CD4-positive, alpha-beta memory T cell (primary cell): ENCODE measurements at regions of chr11 and their contacts with region 1.

Region 1: GRCh38 chr11:85752890-85753581 is 57.9 kb downstream of the SYTL2 start:
- DNase-seq: peak; percentile 97 to 98 (median 98)
- H3K4me3 ChIP-seq: peak overlapping the region; percentile 0 to 50
- H3K4me3 Mint-ChIP-seq: peak overlapping the region; percentile 73 to 93 (median 80)
- H3K27ac ChIP-seq: peak overlapping the region; percentile 60
- H3K27ac Mint-ChIP-seq: peak overlapping the region; percentile 97 to 99 (median 98)
- H3K4me1 ChIP-seq: peaks cover 88% of the 10 kb centered on the region
- H3K4me1 Mint-ChIP-seq: peaks cover 73 to 97% (median 86%) of the 10 kb centered on the region in 4 donors
- H3K27me3 ChIP-seq: no peaks in the 10 kb centered on the region
- H3K27me3 Mint-ChIP-seq: peaks cover 2 to 5% of the 10 kb centered on the region in 2 donors

Region 2: GRCh38 chr11:85627998-85628770 is 124.9 kb before region 1 on chr11 and contains the start of gene TMEM126B:
- CTCF ChIA-PET with region 1: no interaction called
- POLR2A ChIA-PET with region 1: no interaction called
- intact Hi-C with region 1: loop called (anchors 1 kb)
- DNase-seq: peak; percentile 92 to 97 (median 94)
- H3K4me3 ChIP-seq: peak within 1 kb of the TSS; percentile 58 to 73
- H3K4me3 Mint-ChIP-seq: peak within 1 kb of the TSS; percentile 93 to 99 (median 98)
- H3K27ac ChIP-seq: peak within 1 kb of the TSS; percentile 82
- H3K27ac Mint-ChIP-seq: peak within 1 kb of the TSS; percentile 91 to 99 (median 97)
- H3K4me1 ChIP-seq: peaks cover 30% of the 10 kb centered on the region
- H3K4me1 Mint-ChIP-seq: peaks cover 27 to 47% (median 36%) of the 10 kb centered on the region in 4 donors
- H3K27me3 ChIP-seq: no peaks in the 10 kb centered on the region
- H3K27me3 Mint-ChIP-seq: peaks cover 0 to 2% of the 10 kb centered on the region in 2 donors
- total RNA-seq, gene TMEM126B: 40.9 to 46.8 TPM

Region 3: DNA sequence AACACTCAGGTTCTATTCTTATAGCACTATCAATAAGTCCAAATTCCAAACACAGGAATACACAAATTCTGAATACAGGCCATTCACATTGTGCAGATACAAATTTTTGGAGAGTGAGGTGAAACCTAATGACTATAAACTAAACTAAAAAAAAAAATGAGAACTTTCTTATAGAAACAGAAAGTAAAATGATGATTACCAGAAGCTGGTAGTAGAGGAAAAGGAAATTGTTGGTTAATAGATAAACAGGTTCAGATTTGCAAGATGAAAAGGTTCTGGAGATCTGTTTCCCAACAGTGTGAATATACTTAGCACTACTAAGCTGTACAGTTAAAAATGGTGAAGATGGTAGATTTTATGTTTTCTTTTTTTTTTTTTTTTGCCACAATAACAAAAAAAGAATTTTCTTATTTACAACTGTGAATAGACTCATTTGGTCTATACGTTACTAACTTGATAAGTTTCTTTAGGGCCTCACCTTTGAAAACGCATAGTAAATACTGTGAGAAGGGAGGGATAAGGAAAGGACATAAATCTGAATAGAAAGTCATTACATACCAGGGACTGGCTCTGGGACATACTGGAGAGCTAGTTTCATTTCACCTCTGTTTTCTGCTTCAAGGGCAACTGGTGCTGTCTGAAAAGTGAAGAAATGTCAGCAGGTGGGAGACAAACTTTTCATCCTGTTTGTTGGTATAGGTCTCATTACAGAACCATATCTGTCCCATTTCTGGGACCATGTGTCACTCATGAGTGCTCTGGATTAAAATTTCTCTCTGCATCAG is 52.9 kb before region 1 on chr11:
- CTCF ChIA-PET with region 1: interaction called, 3 read pairs
- POLR2A ChIA-PET with region 1: interaction called, 4 read pairs
- intact Hi-C with region 1: loop called (anchors 2 kb)
- DNase-seq: peak in 4 of 5 donors; percentile 32 to 53 (median 40)
- H3K4me3 ChIP-seq: peak overlapping the region in 1 of 2 donors; percentile 7
- H3K4me3 Mint-ChIP-seq: peak overlapping the region in 7 of 8 donors; percentile 32 to 72 (median 61)
- H3K27ac ChIP-seq: no peak overlapping the region
- H3K27ac Mint-ChIP-seq: peak overlapping the region; percentile 40 to 87 (median 68)
- H3K4me1 ChIP-seq: peaks cover 25% of the 10 kb centered on the region
- H3K4me1 Mint-ChIP-seq: peaks cover 21 to 32% (median 23%) of the 10 kb centered on the region in 4 donors
- H3K27me3 ChIP-seq: no peaks in the 10 kb centered on the region
- H3K27me3 Mint-ChIP-seq: no peaks in the 10 kb centered on the region

Region 4: DNA sequence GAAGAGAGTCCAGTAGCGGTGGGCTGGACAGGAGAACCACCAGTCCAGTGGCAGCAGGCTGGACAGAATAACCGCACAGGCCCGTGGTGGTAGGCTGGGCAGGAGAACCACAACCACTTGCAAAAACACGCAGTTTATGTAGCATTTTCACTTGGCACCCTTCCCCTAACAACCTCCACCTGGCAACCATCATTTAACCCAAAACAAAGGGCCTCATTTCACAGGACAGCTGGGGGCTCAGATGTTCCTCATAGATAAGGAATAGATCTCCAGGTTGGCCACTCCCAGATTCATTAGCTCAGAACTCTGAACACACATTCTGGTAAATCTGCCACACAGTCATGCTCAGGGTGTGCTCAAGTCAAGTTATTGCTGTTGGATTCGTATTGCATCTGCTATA is 16.7 kb after region 1 on chr11:
- CTCF ChIA-PET with region 1: interaction called, 4 read pairs
- POLR2A ChIA-PET with region 1: interaction called, 7 read pairs
- intact Hi-C with region 1: loop called (anchors 2 kb)
- DNase-seq: no peak
- H3K4me3 ChIP-seq: no peak overlapping the region
- H3K4me3 Mint-ChIP-seq: no peak overlapping the region
- H3K27ac ChIP-seq: no peak overlapping the region
- H3K27ac Mint-ChIP-seq: no peak overlapping the region
- H3K4me1 ChIP-seq: peaks cover 11% of the 10 kb centered on the region
- H3K4me1 Mint-ChIP-seq: peaks cover 17 to 67% (median 46%) of the 10 kb centered on the region in 4 donors
- H3K27me3 ChIP-seq: no peaks in the 10 kb centered on the region
- H3K27me3 Mint-ChIP-seq: peaks cover 0 to 1% of the 10 kb centered on the region in 2 donors

Region 5: DNA sequence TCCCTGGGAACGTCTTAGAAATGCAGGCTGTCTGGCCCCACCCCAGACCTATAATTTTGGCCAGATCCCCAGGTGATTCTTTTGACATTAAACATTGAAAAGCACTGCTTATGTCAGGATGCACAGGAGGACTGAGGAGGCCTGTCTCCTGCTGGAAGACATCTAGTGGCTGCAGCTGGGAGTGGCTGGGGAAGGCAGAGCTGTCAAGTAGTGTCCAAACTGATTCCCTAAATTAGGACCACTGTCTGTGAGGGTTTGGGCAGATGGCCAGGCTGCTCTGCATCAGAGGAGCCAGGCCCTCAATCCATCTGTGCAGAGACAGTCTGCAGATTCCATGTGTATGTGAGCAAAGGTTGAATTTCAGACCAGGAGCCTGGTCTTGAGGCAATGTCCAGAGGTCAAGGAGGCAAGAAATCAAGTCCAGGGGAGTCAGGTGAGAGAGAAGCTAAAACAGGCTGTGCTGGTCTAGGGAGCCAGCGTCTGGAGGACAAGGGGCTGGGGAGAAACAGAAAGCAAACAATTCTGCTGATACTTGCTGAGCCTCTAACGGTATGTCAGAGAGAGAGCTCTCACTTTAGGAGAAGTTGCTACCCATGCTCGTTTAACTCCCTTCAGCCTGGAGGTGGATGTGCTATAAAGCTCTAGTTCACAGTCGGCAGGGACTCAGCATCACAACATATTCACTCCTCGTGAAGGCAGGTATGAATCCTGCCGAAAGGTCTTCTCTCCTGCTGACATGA is 73.2 kb after region 1 on chr11:
- CTCF ChIA-PET with region 1: interaction called, 23 read pairs
- POLR2A ChIA-PET with region 1: interaction called, 34 read pairs
- intact Hi-C with region 1: loop called (anchors 1 kb)
- DNase-seq: peak in 2 of 5 donors; percentile 18 to 29
- H3K4me3 ChIP-seq: no peak overlapping the region
- H3K4me3 Mint-ChIP-seq: peak overlapping the region in 7 of 8 donors; percentile 4 to 76 (median 18)
- H3K27ac ChIP-seq: peak overlapping the region; percentile 6
- H3K27ac Mint-ChIP-seq: peak overlapping the region; percentile 82 to 99 (median 97)
- H3K4me1 ChIP-seq: peaks cover 74% of the 10 kb centered on the region
- H3K4me1 Mint-ChIP-seq: peaks cover 58 to 77% (median 63%) of the 10 kb centered on the region in 4 donors
- H3K27me3 ChIP-seq: no peaks in the 10 kb centered on the region
- H3K27me3 Mint-ChIP-seq: no peaks in the 10 kb centered on the region

Region 6: DNA sequence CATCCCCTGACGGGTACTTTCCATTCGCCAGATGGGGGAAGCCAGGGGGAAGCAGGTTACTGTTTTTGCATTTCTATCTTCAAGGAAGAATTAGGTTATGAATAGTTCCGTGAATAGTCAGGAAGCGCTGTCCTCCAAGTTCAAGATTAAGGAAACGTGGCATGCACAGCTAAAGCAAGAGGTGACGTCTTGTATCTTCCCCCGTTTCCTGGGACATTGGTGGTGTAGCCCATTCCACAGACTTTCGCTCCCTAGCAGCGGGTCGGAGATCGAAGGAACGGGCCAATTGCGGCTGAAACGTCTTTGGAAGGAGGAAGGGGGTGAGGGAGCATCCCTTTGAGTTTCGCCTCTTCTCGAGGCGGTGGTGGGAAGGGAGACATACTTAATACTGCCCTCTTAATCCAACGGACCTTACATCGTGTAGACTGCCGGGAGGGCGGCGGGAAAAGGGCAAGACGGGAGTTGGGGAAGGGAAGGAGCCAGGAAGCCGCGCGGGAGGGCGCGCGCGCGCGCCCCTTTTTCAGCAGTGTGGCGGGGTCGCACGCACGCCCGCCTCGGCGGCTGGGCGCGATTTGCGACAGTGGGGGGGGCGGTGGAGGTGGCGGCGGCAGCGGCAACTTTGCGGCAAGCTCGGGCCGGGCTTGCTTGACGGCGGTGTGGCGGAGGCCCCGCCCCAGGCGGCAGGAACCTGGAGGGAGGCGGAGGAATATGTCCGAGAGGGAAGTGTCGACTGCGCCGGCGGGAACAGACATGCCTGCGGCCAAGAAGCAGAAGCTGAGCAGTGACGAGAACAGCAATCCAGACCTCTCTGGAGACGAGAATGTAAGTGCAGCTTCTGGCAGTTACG is 491.7 kb after region 1 on chr11 and contains the start of gene EED:
- CTCF ChIA-PET with region 1: no interaction called
- POLR2A ChIA-PET with region 1: no interaction called
- intact Hi-C with region 1: loop called (anchors 1 kb)
- DNase-seq: peak; percentile 92 to 96 (median 93)
- H3K4me3 ChIP-seq: peak within 1 kb of the TSS; percentile 98 to 99
- H3K4me3 Mint-ChIP-seq: no peak within 1 kb of the TSS
- H3K27ac ChIP-seq: peak within 1 kb of the TSS; percentile 99
- H3K27ac Mint-ChIP-seq: no peak within 1 kb of the TSS
- H3K4me1 ChIP-seq: peaks cover 54% of the 10 kb centered on the region
- H3K4me1 Mint-ChIP-seq: peaks cover 0 to 35% (median 13%) of the 10 kb centered on the region in 4 donors
- H3K27me3 ChIP-seq: no peaks in the 10 kb centered on the region
- H3K27me3 Mint-ChIP-seq: peaks cover 0 to 2% of the 10 kb centered on the region in 2 donors
- total RNA-seq, gene EED: 47.1 to 51.0 TPM